ENCODE measurements at regions of chr13 and their contacts with region 1.

Region 1: DNA sequence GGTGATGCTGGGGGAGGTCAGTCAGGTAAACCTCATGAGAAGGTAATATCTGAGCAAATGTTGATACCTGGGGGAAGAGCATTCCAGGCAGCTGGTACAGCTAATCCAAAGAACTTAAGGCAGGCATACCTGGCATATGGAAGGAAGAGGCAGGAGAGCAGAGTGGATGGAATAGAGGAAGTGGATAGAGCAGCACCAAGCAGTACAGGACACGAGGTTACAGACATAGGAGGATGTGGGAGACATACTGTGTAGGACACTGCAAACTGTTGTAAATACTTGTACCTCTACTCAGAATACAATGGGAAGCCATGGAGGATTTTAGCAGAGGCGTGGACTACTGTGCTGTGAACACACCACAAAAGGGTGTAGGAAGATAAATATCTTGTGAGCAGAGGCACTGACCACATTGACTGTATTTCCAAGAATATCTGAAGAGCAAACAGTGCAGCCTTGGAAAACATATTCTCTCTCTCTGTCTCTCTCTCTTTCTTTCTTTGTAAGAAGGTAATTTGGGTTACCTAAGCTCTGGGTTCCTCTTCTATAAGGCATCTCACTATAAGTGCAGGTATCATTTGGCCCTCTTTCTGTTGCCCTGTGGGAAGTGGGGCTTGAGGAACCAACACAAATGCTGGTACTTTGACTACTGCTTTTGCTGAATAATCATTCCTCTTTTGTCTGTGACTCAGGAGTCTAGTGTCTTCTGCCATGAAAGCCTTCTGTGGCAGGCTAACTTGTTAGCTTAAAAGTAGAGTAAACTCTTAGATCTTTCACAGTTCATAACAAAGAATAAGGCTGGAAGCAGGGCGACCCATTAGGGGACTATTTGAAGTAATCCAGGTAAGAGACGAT is 238.0 kb downstream of the VWA8 start:
- DNase-seq: no peak
- ATAC-seq: no peak
- H3K4me3 ChIP-seq: no peak overlapping the region
- H3K27ac ChIP-seq: no peak overlapping the region
- H3K4me1 ChIP-seq: no peaks in the 10 kb centered on the region
- H3K27me3 ChIP-seq: no peaks in the 10 kb centered on the region
- CTCF ChIP-seq: no peak

Region 2: GRCh38 chr13:41680900-41681299 is 42.0 kb before region 1 on chr13:
- intact Hi-C with region 1: loop called in 1 of 2 experiments (anchors 1 kb)
- DNase-seq: no peak
- ATAC-seq: no peak
- H3K4me3 ChIP-seq: no peak overlapping the region
- H3K27ac ChIP-seq: no peak overlapping the region
- H3K4me1 ChIP-seq: peaks cover 14% of the 10 kb centered on the region
- H3K27me3 ChIP-seq: no peaks in the 10 kb centered on the region
- CTCF ChIP-seq: no peak

Measured in psoas muscle (tissue), 8 donors.